ENCODE measurements at regions of chr17 and their contacts with region 1.

Region 1: DNA sequence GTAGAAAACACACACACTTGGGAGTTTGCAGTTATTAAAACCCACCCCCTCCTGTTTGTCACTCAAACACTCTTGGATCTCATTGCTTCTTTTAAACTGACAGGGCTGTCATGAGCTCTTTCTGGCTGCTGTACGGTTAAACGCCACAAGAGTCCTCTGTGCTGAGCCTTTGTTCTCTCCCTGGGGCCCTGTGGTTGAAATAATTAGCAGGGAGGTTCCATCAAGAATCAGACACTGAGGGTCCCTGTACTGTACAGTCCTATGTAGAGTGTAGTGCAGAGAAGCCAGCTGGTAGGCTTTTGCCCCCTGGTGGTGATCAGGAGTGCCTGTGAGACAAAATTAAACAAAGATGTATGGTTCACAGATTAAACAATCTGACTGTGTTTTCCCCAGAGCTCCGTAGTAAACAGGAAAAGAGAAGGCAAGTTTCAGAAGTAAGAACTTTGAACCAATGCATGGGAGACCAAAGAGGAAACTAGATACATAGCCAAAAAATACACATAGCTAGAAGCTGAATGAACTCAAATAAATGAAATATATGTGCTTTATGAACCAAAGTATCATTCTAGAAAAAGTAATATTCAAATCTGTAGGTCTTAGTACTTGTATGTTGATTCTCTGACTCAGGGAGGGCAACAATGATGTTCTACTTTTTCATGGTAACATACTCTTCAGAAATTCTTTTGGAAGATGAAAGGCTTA is 1.4 kb upstream of the SSH2 start:
- DNase-seq: peak in 1 of 2 experiments; percentile 53
- H3K4me3 ChIP-seq: peak overlapping the region; percentile 84 to 96 (median 86); a peak in 5 of 8 replicates
- H3K27ac ChIP-seq: no peak overlapping the region
- H3K4me1 ChIP-seq: peaks cover 0 to 9% (median 2%) of the 10 kb centered on the region in 4 experiments; a peak in 4 of 7 replicates
- H3K27me3 ChIP-seq: peaks cover 0 to 3% (median under 1%) of the 10 kb centered on the region in 4 experiments; a peak in 2 of 7 replicates
- CTCF ChIP-seq: peak; percentile 47 to 82 (median 80)
- EP300 ChIP-seq: no peak
- POLR2A ChIP-seq: no peak
- RAD21 ChIP-seq: peak; percentile 66 to 76

Region 2: DNA sequence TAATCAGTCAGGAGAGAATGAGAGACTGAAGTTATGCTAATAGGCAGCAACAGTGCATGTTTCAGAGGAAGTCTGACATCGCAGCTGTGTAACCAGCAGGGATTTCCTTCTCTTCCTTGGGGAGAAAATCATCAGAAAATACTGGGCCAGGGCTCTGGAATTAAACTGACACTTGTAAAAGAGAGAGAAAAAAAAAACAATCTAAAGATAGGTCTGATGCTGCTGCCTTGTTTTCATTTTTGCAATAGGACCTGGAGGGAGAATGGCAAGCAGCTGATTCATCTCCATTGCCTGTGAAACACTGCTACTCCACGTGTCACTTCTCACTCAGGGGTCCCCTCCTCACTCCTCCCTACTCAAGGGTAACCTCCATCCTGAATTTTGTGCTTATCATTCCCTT is 291.0 kb before region 1 on chr17:
- CTCF ChIA-PET with region 1: interaction called, 41 read pairs
- POLR2A ChIA-PET with region 1: interaction called, 4 read pairs
- DNase-seq: no peak
- H3K4me3 ChIP-seq: no peak overlapping the region
- H3K27ac ChIP-seq: no peak overlapping the region
- H3K4me1 ChIP-seq: peaks cover 0 to 10% (median 3%) of the 10 kb centered on the region in 4 experiments; a peak in 3 of 7 replicates
- H3K27me3 ChIP-seq: no peaks in the 10 kb centered on the region
- CTCF ChIP-seq: no peak
- EP300 ChIP-seq: no peak
- POLR2A ChIP-seq: no peak
- RAD21 ChIP-seq: no peak

Region 3: DNA sequence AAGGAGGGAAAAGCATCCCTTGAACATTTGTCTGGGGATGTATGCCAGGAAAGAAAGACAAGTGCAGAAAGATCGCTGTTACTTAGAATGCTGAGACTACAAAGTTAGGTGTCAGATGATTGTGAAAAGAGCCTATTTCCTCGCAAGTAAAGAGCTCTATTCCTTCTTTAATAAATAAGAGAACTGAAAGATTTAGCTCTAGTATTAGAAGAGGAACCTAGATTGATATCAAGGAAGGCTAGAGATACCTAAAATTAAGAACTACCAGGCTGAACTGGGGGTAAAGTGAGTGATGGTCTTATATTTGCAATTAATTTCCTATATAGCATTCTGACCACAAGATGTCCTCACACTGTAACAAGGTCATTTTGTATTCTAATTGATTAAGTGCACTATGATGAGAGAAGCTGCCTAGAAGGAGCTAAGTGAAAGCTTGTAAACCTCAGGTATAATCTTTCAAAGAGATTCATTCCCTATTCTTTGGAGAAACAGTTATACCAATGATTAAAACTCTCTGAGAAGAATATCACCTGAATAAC is 63.7 kb before region 1 on chr17:
- CTCF ChIA-PET with region 1: interaction called, 41 read pairs
- POLR2A ChIA-PET with region 1: no interaction called
- DNase-seq: no peak
- H3K4me3 ChIP-seq: no peak overlapping the region
- H3K27ac ChIP-seq: no peak overlapping the region
- H3K4me1 ChIP-seq: peaks cover 0 to 6% (median 3%) of the 10 kb centered on the region in 4 experiments; a peak in 6 of 7 replicates
- H3K27me3 ChIP-seq: no peaks in the 10 kb centered on the region
- CTCF ChIP-seq: peak in 2 of 3 experiments; percentile 9 to 10; a peak in 2 of 4 replicates
- EP300 ChIP-seq: no peak
- POLR2A ChIP-seq: no peak
- RAD21 ChIP-seq: peak in 1 of 2 experiments; percentile 24; a peak in 2 of 4 replicates

Region 4: GRCh38 chr17:29918922-29919856 is 12.2 kb before region 1 on chr17:
- CTCF ChIA-PET with region 1: interaction called, 19 read pairs
- POLR2A ChIA-PET with region 1: interaction called, 4 read pairs
- DNase-seq: no peak
- H3K4me3 ChIP-seq: no peak overlapping the region
- H3K27ac ChIP-seq: no peak overlapping the region
- H3K4me1 ChIP-seq: no peaks in the 10 kb centered on the region
- H3K27me3 ChIP-seq: no peaks in the 10 kb centered on the region
- CTCF ChIP-seq: no peak
- EP300 ChIP-seq: no peak
- POLR2A ChIP-seq: no peak
- RAD21 ChIP-seq: no peak

Region 5: GRCh38 chr17:29972277-29972676 is 40.9 kb after region 1 on chr17:
- CTCF ChIA-PET with region 1: no interaction called
- POLR2A ChIA-PET with region 1: no interaction called
- DNase-seq: no peak
- H3K4me3 ChIP-seq: no peak overlapping the region
- H3K27ac ChIP-seq: no peak overlapping the region
- H3K4me1 ChIP-seq: no peaks in the 10 kb centered on the region
- H3K27me3 ChIP-seq: no peaks in the 10 kb centered on the region
- CTCF ChIP-seq: no peak
- EP300 ChIP-seq: no peak
- POLR2A ChIP-seq: no peak
- RAD21 ChIP-seq: no peak